ENCODE measurements at regions of chr9 and their contacts with region 1.

Region 1: GRCh38 chr9:114894801-114895433 is 35.5 kb downstream of the TNFSF8 start:
- DNase-seq: peak; percentile 80
- H3K4me3 Mint-ChIP-seq: no peak overlapping the region
- H3K27ac Mint-ChIP-seq: peak overlapping the region; percentile 85
- H3K4me1 Mint-ChIP-seq: peaks cover 56% of the 10 kb centered on the region
- H3K27me3 Mint-ChIP-seq: no peaks in the 10 kb centered on the region

Region 2: DNA sequence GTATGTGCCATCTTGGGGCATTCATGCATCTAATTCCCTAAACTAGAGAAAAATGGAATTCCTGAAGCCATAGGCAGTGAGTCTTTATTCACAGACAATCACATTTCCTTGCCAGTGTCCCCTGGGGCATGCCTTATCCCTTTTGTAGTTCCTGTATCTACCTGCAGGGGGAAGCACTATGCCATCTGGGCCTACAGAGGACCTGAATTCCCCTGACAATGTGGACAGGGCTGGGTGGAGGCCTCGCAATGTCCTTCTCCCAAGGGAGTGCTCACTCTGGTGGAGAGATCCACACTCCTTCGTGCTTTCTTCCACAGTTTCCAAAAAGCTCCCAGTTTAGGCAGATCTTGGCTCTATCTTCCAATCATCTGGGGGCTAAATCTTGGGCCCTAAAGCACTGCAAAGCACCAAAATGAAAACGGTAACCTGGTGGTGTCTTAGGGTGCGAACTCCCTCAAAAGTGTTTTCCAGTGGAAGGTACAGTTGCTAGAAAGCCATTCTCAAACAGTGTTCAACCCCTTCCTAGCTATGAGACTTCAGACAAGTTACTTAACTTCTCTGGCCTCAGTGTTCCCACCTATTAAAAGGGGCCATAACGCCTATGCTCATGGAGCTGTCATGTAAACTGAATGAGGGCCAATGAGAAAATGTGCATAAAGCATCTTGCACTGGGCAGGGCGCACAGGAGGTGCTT is 407.2 kb before region 1 on chr9:
- CTCF ChIA-PET with region 1: no interaction called
- intact Hi-C with region 1: loop called (anchors 10 kb)
- DNase-seq: peak; percentile 81
- H3K4me3 Mint-ChIP-seq: no peak overlapping the region
- H3K27ac Mint-ChIP-seq: no peak overlapping the region
- H3K4me1 Mint-ChIP-seq: peaks cover 19% of the 10 kb centered on the region
- H3K27me3 Mint-ChIP-seq: no peaks in the 10 kb centered on the region

Region 3: GRCh38 chr9:114718801-114719221 is 176.1 kb before region 1 on chr9:
- CTCF ChIA-PET with region 1: no interaction called
- intact Hi-C with region 1: loop called (anchors 2 kb)
- DNase-seq: peak; percentile 97
- H3K4me3 Mint-ChIP-seq: peak overlapping the region; percentile 22
- H3K27ac Mint-ChIP-seq: peak overlapping the region; percentile 81
- H3K4me1 Mint-ChIP-seq: peaks cover 49% of the 10 kb centered on the region
- H3K27me3 Mint-ChIP-seq: peaks cover 5% of the 10 kb centered on the region

Region 4: GRCh38 chr9:114830546-114830945 is 64.4 kb before region 1 on chr9:
- CTCF ChIA-PET with region 1: no interaction called
- intact Hi-C with region 1: loop called (anchors 5 kb)
- DNase-seq: no peak
- H3K4me3 Mint-ChIP-seq: no peak overlapping the region
- H3K27ac Mint-ChIP-seq: no peak overlapping the region
- H3K4me1 Mint-ChIP-seq: peaks cover 16% of the 10 kb centered on the region
- H3K27me3 Mint-ChIP-seq: no peaks in the 10 kb centered on the region

Region 5: GRCh38 chr9:114906908-114907571 is 12.1 kb after region 1 on chr9:
- CTCF ChIA-PET with region 1: interaction called, 15 read pairs
- intact Hi-C with region 1: loop called (anchors 1 kb)
- DNase-seq: peak; percentile 46
- H3K4me3 Mint-ChIP-seq: no peak overlapping the region
- H3K27ac Mint-ChIP-seq: peak overlapping the region; percentile 98
- H3K4me1 Mint-ChIP-seq: peaks cover 54% of the 10 kb centered on the region
- H3K27me3 Mint-ChIP-seq: no peaks in the 10 kb centered on the region

Region 6: GRCh38 chr9:114930056-114930812 is 35.3 kb after region 1 on chr9 and contains the start of gene TNFSF8:
- CTCF ChIA-PET with region 1: interaction called, 6 read pairs
- intact Hi-C with region 1: loop called (anchors 1 kb)
- DNase-seq: peak; percentile 90
- H3K4me3 Mint-ChIP-seq: peak within 1 kb of the TSS; percentile 94
- H3K27ac Mint-ChIP-seq: peak within 1 kb of the TSS; percentile 97
- H3K4me1 Mint-ChIP-seq: peaks cover 38% of the 10 kb centered on the region
- H3K27me3 Mint-ChIP-seq: no peaks in the 10 kb centered on the region
- total RNA-seq, gene TNFSF8: 25.9 to 26.4 TPM

Region 7: GRCh38 chr9:115204904-115205453 is 310.1 kb after region 1 on chr9:
- CTCF ChIA-PET with region 1: no interaction called
- intact Hi-C with region 1: loop called (anchors 10 kb)
- DNase-seq: no peak
- H3K4me3 Mint-ChIP-seq: no peak overlapping the region
- H3K27ac Mint-ChIP-seq: no peak overlapping the region
- H3K4me1 Mint-ChIP-seq: peaks cover 15% of the 10 kb centered on the region
- H3K27me3 Mint-ChIP-seq: peaks cover 33% of the 10 kb centered on the region